ENCODE measurements at regions of chr1 and their contacts with region 1.

Region 1: GRCh38 chr1:202571347-202572339 is 138.6 kb downstream of the SYT2 start:
- DNase-seq: no peak
- ATAC-seq: peak; percentile 52
- H3K4me3 Mint-ChIP-seq: no peak overlapping the region
- H3K27ac Mint-ChIP-seq: no peak overlapping the region
- H3K4me1 Mint-ChIP-seq: peaks cover 8% of the 10 kb centered on the region
- H3K27me3 Mint-ChIP-seq: no peaks in the 10 kb centered on the region
- CTCF ChIP-seq: peak; percentile 18

Region 2: DNA sequence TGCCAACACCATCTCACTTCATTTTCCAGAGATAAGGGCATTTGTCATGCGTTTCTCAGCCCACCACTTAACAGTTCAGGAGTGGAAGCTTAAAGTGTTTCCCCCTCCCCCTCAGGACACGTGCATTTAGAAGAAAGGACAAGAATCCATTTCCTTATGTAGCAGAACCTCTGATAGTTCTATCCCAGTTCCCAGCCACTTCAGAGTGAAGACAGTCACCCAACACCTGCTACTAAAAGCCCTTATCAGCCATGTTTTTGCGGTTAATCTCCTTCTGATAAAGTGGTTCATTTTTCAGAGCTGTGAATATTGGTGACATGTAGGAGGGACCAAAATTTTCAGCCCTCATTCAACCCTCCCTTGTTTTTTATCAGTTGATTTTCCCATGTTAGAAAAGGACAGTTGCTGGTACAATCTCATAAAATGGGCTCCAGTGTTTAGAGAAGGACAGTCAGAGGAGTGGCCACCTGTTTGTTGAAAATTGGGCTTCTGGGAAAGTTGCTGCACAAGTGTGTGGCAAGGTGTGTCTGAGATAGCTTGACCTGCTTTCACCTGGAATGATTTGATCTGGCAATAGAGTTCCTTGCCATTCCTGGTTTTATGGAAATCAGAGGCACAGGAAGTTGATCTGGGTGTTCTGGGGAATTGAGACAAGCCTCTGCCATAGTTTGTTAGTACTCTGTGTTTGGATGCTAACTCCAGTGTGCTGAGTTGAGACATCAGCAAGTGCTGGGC is 109.1 kb before region 1 on chr1:
- CTCF ChIA-PET with region 1: interaction called, 14 read pairs
- POLR2A ChIA-PET with region 1: no interaction called
- intact Hi-C with region 1: loop called (anchors 1 kb)
- DNase-seq: no peak
- ATAC-seq: no peak
- H3K4me3 Mint-ChIP-seq: no peak overlapping the region
- H3K27ac Mint-ChIP-seq: no peak overlapping the region
- H3K4me1 Mint-ChIP-seq: no peaks in the 10 kb centered on the region
- H3K27me3 Mint-ChIP-seq: no peaks in the 10 kb centered on the region
- CTCF ChIP-seq: no peak

Region 3: DNA sequence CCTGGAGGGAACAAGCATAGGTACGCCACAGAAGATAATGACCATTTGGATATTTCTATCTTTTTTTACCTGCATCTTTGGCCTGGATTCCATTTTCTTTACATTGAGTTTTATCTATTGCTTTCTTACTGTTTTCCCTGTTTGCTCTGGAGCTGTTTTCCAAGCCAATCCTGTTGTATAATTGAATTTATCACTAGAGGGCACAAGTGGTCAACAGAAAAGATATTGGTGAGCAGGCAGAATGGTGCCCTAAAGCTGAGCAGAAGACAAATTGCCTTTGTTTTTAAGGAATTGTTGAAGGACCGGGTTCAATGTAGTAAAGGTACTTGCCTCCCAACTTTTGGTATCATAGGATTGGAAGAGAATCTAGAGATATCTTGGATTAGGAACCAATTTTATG is 70.4 kb before region 1 on chr1:
- CTCF ChIA-PET with region 1: interaction called, 24 read pairs
- POLR2A ChIA-PET with region 1: no interaction called
- intact Hi-C with region 1: loop called (anchors 1 kb)
- DNase-seq: no peak
- ATAC-seq: no peak
- H3K4me3 Mint-ChIP-seq: no peak overlapping the region
- H3K27ac Mint-ChIP-seq: no peak overlapping the region
- H3K4me1 Mint-ChIP-seq: no peaks in the 10 kb centered on the region
- H3K27me3 Mint-ChIP-seq: no peaks in the 10 kb centered on the region
- CTCF ChIP-seq: no peak

Measured in activated B cell treated with CpG ODN at 0.5 μM for 24 hours (primary cell).